Dorsolateral prefrontal cortex (tissue), 120 donors: ENCODE measurements at regions of chr3 and their contacts with region 1.

Region 1: DNA sequence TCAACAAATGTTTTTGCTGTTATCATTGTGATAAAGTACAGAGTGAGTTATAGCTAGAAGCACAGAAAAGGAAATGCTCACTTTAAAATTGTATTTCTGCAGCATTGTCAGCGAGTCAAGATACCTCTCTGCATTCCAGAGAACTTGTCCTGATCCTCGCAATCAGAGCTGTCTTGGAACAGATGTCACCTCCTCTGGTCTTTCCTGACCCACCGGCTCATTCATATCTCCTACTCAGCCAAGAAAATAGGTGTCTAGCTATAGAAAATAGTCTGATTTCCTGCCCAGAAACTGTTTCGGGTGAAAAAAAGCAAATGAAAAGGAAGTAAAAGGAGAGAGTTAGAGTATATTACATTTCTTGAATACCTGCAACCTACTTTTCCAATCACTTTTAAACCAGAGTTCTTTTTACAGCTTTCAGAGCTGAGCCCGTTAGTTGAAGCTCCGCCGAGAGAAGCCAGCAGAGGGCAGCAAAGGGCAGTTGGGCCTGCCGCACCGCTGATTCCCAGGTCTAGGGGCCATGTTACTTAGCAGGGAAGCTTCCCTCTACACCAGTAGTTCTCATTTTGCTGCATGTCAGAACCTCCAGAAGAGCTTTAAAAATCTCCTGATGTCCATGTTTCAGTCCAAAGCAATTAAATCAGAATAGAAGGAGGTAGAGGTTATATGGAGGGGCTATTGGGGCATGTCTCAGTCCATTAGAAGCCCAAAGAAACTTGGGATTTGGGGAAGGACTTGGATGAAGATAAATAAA is 185.7 kb upstream of the THRB start:
- DNase-seq: peak in 9 of 10 donors; percentile 48 to 70 (median 55)
- H3K4me3 ChIP-seq: no peak overlapping the region
- H3K27ac ChIP-seq: peak overlapping the region in 7 of 59 donors; percentile 1 to 35 (median 15)
- H3K27me3 ChIP-seq: no peaks in the 10 kb centered on the region
- CTCF ChIP-seq: peak; percentile 19 to 79 (median 68)

Region 2: DNA sequence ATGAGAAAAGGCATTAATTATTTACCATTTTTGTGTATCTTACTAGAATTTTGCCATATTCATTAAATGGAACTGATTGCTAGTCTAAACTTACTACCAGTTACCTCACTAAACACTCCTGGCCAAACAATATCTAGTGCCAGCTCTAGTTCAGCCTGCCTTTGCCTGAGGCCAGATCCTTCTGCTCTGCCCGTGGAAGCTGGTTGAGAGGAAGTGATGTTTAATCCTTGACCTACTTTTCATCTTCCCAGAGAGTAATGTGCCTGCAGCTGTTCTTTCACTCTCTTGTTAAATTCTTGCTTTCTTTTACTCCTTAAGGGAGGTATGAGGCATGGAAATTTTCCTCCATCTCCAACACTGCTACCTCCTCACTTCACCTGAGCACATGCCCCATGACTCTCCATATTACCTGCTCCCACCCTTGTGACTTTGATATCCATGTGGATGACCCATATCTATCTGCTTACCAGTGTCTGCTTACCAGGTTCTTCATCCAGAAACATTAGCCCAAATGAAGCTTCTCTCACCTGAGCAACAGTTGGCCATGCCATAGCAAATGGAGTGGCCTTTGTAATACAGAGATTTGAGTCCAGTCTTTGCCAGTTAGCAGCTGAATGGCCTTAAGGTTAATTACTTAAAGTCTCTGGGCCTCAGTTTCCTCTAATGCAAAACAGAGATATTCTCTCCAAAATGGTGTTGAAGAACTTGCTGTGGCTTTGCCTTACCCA is 821.2 kb before region 1 on chr3:
- intact Hi-C with region 1: no loop called
- DNase-seq: peak in 1 of 10 donors; percentile 16
- H3K4me3 ChIP-seq: no peak overlapping the region
- H3K27ac ChIP-seq: peak overlapping the region in 25 of 59 donors; percentile 1 to 59 (median 22)
- H3K27me3 ChIP-seq: no peaks in the 10 kb centered on the region
- CTCF ChIP-seq: no peak

Region 3: GRCh38 chr3:23999012-23999641 is 681.3 kb before region 1 on chr3:
- intact Hi-C with region 1: loop called (anchors 2 to 5 kb)
- DNase-seq: peak; percentile 56 to 96 (median 79)
- H3K4me3 ChIP-seq: peak overlapping the region in 41 of 59 donors; percentile 0 to 55 (median 34)
- H3K27ac ChIP-seq: peak overlapping the region in 55 of 59 donors; percentile 1 to 87 (median 73)
- H3K27me3 ChIP-seq: no peaks in the 10 kb centered on the region
- CTCF ChIP-seq: peak; percentile 80 to 98 (median 93)

Region 4: DNA sequence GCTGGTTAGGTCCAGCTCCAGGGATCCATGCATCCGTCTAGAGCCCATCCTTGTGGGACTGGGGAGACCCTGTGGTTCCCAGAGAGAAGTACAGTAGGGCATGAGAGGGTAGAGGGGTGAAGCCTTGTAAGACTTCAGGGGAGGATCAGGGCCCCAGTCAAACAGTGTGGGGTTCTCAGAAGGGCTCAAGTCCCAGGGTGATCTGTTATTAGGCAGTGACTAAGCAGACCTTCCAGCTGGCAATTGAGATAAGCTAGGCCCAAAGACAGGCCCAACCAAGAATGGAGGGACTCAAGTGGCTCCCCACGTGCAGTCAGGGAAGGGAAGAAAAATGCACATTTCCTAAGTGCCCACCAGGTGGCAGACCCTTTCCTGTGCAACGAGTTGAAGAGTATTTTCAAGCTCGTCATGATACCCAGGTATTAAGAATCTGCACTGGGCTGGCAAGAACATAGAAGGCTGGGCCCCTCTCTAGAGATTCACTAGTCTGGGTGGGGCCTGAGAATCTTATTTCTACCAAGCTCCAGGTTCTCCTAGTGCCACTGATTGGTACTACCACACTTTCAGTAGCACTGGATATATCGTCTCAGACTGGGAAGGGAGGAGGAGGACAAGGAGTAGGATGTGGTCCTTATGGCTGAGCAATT is 494.5 kb before region 1 on chr3:
- intact Hi-C with region 1: loop called in 1 of 2 experiments (anchors 10 kb)
- DNase-seq: peak in 3 of 10 donors; percentile 28 to 58 (median 49)
- H3K4me3 ChIP-seq: peak overlapping the region in 3 of 59 donors; percentile 15 to 35 (median 24)
- H3K27ac ChIP-seq: peak overlapping the region in 1 of 59 donors; percentile 14
- H3K27me3 ChIP-seq: no peaks in the 10 kb centered on the region
- CTCF ChIP-seq: peak in 55 of 56 donors; percentile 42 to 78 (median 68)

Region 5: GRCh38 chr3:24853685-24854490 is 173.5 kb after region 1 on chr3:
- intact Hi-C with region 1: no loop called
- DNase-seq: no peak
- H3K4me3 ChIP-seq: no peak overlapping the region
- H3K27ac ChIP-seq: no peak overlapping the region
- H3K27me3 ChIP-seq: no peaks in the 10 kb centered on the region
- CTCF ChIP-seq: no peak

Region 6: GRCh38 chr3:24914036-24914435 is 233.6 kb after region 1 on chr3:
- intact Hi-C with region 1: no loop called
- DNase-seq: no peak
- H3K4me3 ChIP-seq: no peak overlapping the region
- H3K27ac ChIP-seq: no peak overlapping the region
- H3K27me3 ChIP-seq: no peaks in the 10 kb centered on the region
- CTCF ChIP-seq: no peak